Activated B cell treated with CpG ODN at 0.5 μM for 24 hours (primary cell): ENCODE measurements at regions of chr4 and their contacts with region 1.

Region 1: DNA sequence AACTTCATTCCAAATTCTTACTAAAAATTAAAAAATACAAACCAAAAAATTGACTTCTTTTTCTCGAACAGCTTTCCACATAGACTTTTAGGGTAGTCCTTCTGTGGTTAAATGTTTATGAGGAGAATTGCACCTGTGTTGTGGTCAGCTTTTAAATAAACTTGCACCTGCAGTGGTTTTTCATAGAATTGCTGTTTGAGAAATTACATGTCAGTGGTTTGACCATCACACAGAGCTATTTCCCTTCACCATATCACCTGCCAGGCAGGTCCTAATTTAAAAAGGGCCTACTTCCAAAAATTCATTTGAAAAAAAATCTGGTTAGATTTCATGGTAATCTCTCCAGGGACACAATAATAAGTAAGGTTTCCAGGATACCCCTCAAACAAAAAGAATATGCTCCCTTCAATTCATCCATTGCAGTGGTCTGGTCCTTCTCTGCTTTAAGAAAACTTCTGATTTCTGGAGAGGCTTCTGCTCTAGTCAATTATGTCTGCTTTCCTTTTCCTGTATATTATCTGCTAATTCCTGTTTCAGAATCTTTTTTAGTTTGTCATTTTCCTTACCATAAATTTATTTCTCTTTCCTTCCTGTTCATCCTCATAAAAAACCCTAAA is 9.8 kb upstream of the UTP3 start:
- DNase-seq: no peak
- ATAC-seq: no peak
- H3K4me3 Mint-ChIP-seq: no peak overlapping the region
- H3K27ac Mint-ChIP-seq: peak overlapping the region; percentile 53
- H3K4me1 Mint-ChIP-seq: peaks cover 56% of the 10 kb centered on the region
- H3K27me3 Mint-ChIP-seq: no peaks in the 10 kb centered on the region
- CTCF ChIP-seq: no peak

Region 2: GRCh38 chr4:70660106-70660505 is 18.4 kb before region 1 on chr4:
- CTCF ChIA-PET with region 1: interaction called, 4 read pairs
- POLR2A ChIA-PET with region 1: interaction called, 5 read pairs
- intact Hi-C with region 1: loop called (anchors 2 kb)
- DNase-seq: no peak
- ATAC-seq: no peak
- H3K4me3 Mint-ChIP-seq: no peak overlapping the region
- H3K27ac Mint-ChIP-seq: peak overlapping the region; percentile 77
- H3K4me1 Mint-ChIP-seq: peaks cover 21% of the 10 kb centered on the region
- H3K27me3 Mint-ChIP-seq: no peaks in the 10 kb centered on the region
- CTCF ChIP-seq: no peak

Region 3: GRCh38 chr4:70666369-70666768 is 12.1 kb before region 1 on chr4 and contains the start of gene JCHAIN:
- CTCF ChIA-PET with region 1: interaction called, 4 read pairs
- POLR2A ChIA-PET with region 1: interaction called, 5 read pairs
- intact Hi-C with region 1: loop called (anchors 1 kb)
- DNase-seq: no peak
- ATAC-seq: no peak
- H3K4me3 Mint-ChIP-seq: peak within 1 kb of the TSS; percentile 76
- H3K27ac Mint-ChIP-seq: peak within 1 kb of the TSS; percentile 77
- H3K4me1 Mint-ChIP-seq: peaks cover 53% of the 10 kb centered on the region
- H3K27me3 Mint-ChIP-seq: no peaks in the 10 kb centered on the region
- CTCF ChIP-seq: no peak
- total RNA-seq, gene JCHAIN: 47.0 and 53.7 TPM in 2 replicates

Region 4: DNA sequence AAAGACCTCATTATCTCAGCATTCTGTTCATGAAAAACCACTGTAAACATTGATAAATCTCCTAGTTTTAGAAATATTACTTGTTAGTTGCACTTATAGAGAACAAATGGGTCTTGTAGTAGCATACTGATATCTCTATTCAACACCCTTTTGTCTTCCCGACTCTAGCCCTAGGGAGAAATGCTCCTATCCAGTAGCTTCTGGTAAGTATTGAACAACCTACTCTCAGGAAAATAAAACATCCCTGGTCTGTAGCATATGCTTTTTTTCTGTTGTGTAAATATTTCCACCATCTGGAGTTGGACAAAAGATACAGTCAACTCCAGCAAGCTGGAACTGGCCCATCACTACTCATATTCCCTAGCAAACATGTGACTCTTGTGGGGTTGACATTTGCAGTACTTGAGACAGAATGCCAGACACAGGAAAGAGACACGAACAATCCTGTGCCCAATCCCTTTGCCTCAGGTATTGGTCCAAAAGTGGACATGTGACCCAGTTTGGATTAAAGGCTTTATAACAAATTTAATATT is 917.2 kb after region 1 on chr4:
- CTCF ChIA-PET with region 1: no interaction called
- POLR2A ChIA-PET with region 1: no interaction called
- intact Hi-C with region 1: no loop called
- DNase-seq: no peak
- ATAC-seq: no peak
- H3K4me3 Mint-ChIP-seq: no peak overlapping the region
- H3K27ac Mint-ChIP-seq: no peak overlapping the region
- H3K4me1 Mint-ChIP-seq: no peaks in the 10 kb centered on the region
- H3K27me3 Mint-ChIP-seq: peaks cover 4% of the 10 kb centered on the region
- CTCF ChIP-seq: no peak